Ascending aorta (tissue), 2 donors: ENCODE measurements at regions of chr6 and their contacts with region 1.

Region 1: GRCh38 chr6:25922301-25922700 is 8.2 kb downstream of the SLC17A2 start:
- DNase-seq: peak in 1 of 2 donors; percentile 74
- H3K4me3 ChIP-seq: no peak overlapping the region
- H3K27ac ChIP-seq: peak overlapping the region; percentile 27 to 67
- H3K4me1 ChIP-seq: peaks cover 0 to 5% of the 10 kb centered on the region in 2 donors
- H3K27me3 ChIP-seq: no peaks in the 10 kb centered on the region
- CTCF ChIP-seq: no peak

Region 2: DNA sequence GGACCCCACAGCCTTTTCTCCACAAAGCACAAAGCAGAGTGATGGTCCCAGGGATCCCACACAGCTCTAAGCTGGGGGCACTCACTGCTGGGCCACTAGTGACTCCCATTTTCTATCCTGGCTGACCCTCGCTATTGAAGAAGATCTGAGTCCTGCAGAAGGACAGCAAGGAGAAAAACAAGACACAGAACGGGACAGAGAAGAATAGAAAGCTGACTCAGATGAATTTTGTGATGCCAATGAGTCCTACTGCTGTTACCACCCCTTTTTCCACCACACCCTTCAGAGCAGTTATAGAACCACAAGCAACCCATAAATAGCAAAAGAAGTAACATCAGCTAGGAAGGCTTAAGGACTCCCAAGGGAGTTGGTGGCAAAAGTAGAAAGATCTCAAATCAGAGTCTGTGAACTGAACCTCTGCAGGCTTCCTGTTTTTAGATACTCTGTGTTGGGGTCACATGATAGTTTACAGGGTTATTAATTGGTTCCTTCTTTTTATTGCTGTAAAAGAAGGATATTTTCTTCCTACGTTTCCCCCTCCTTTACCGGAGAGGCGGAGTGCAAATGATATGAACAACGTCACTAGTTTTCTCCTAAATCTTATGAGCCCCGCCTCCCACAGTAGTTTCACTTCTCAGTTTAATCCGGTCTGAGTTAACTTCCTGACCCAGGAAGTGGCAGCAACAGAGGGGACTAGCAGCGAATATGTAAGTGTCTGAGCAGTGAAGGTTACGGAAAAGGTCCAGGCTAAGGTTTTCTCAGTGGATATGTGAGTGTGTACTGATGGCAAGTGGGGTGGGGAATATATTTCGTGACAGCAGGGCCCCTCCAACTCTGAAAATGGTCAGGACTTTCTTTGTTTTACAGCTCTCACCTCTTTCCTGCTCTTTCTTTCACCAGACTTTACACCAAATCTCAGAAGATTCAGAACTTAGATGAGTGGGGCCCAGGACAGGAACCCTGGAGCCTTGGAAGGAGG is 40.1 kb after region 1 on chr6 and contains the start of gene TRIM38:
- intact Hi-C with region 1: loop called (anchors 5 kb)
- DNase-seq: peak; percentile 55 to 93
- H3K4me3 ChIP-seq: peak within 1 kb of the TSS; percentile 56 to 94
- H3K27ac ChIP-seq: peak within 1 kb of the TSS; percentile 94 to 98
- H3K4me1 ChIP-seq: peaks cover 9 to 29% of the 10 kb centered on the region in 2 donors
- H3K27me3 ChIP-seq: no peaks in the 10 kb centered on the region
- CTCF ChIP-seq: no peak
- total RNA-seq, gene TRIM38: 7.6 TPM